ENCODE measurements at regions of chr9 and their contacts with region 1.

Region 1: GRCh38 chr9:129884220-129885017 is 49.2 kb downstream of the USP20 start:
- DNase-seq: peak; percentile 98
- ATAC-seq: peak; percentile 62
- H3K4me3 Mint-ChIP-seq: peak overlapping the region; percentile 90
- H3K27ac Mint-ChIP-seq: peak overlapping the region; percentile 99
- H3K4me1 Mint-ChIP-seq: peaks cover 57% of the 10 kb centered on the region
- H3K27me3 Mint-ChIP-seq: no peaks in the 10 kb centered on the region

Region 2: GRCh38 chr9:129569502-129570449 is 314.6 kb before region 1 on chr9:
- CTCF ChIA-PET with region 1: no interaction called
- POLR2A ChIA-PET with region 1: no interaction called
- DNase-seq: no peak
- ATAC-seq: no peak
- H3K4me3 Mint-ChIP-seq: peak overlapping the region; percentile 54
- H3K27ac Mint-ChIP-seq: no peak overlapping the region
- H3K4me1 Mint-ChIP-seq: peaks cover 25% of the 10 kb centered on the region
- H3K27me3 Mint-ChIP-seq: peaks cover 30% of the 10 kb centered on the region

Region 3: DNA sequence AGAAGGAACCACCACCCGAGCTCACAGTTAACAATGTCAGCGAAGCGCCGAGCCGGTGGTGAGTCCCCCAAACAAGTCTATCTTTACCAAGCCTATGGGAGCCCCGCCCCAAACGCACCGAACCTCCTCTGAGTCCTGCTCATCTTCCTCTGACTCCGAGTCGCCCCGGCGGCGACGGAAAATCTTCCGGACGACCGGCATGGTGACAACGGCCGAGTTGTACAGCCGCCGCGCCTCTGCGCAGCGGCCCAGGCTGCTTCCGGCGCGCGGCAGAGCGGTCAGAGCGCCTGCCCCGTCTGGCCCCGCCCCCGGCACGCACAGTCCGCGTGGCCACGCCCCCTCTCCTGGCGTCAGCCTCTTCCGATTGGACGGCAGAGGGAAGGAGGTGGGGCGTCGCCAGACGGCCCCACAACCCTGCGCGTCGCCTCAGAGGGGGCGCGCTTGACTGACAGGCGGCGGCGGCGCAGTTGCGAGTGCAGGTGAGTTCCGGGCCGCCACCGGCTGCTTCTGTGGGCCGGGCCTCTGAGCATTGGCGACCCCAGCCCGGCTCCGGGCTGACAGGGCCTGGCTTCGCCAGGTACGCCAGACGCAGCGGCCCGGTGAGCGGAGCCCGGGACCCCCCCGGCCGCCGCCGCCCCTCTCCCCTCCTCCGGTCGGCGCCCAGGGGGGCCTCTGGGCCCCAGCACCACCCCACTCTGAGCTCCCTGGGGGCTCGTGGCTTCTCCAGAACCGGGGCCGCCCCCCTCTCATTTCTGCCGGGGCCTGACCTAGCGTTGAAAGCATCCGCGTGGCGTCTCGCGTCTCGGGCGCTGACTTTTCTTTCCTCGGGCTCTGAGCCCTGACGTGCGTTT is 49.2 kb before region 1 on chr9 and contains the starts of genes C9orf78 and USP20:
- CTCF ChIA-PET with region 1: interaction called, 8 read pairs
- POLR2A ChIA-PET with region 1: interaction called, 25 read pairs
- DNase-seq: peak; percentile 97
- ATAC-seq: peak; percentile 91
- H3K4me3 Mint-ChIP-seq: peak within 1 kb of the TSS; percentile 98
- H3K27ac Mint-ChIP-seq: peak within 1 kb of the TSS; percentile 99
- H3K4me1 Mint-ChIP-seq: peaks cover 57% of the 10 kb centered on the region
- H3K27me3 Mint-ChIP-seq: no peaks in the 10 kb centered on the region
- total RNA-seq, gene C9orf78: 89.7 to 91.7 TPM
- total RNA-seq, gene USP20: 86.2 to 87.4 TPM

Region 4: DNA sequence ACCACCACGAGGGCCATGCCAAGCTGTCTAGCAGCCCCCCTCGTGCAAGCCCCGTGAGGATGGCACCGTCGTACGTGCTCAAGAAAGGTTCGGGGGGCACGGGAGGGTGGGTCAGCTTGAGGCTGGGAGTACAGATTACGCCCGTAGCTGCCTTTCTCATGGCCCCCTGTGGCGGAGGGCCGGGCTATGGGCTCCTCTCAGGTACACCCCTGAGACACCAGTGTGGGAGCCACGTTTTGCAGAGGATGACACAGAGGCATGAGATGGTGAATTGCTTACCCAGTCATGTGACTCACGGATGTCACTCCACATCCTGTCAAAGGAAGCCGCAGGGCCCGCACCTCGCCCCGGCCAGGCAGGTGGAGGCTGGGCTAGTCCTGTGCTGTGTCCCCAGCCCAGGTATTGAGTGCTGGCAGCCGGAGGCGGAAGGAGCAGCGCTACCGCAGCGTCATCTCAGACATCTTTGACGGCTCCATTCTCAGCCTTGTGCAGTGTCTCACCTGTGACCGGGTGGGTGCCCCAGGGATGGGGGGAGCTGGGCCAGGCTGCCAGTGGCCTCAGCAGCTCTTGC is 15.4 kb before region 1 on chr9:
- CTCF ChIA-PET with region 1: interaction called, 25 read pairs
- POLR2A ChIA-PET with region 1: interaction called, 126 read pairs
- DNase-seq: peak; percentile 96
- ATAC-seq: peak; percentile 85
- H3K4me3 Mint-ChIP-seq: peak overlapping the region; percentile 67
- H3K27ac Mint-ChIP-seq: peak overlapping the region; percentile 95
- H3K4me1 Mint-ChIP-seq: peaks cover 84% of the 10 kb centered on the region
- H3K27me3 Mint-ChIP-seq: no peaks in the 10 kb centered on the region

Region 5: DNA sequence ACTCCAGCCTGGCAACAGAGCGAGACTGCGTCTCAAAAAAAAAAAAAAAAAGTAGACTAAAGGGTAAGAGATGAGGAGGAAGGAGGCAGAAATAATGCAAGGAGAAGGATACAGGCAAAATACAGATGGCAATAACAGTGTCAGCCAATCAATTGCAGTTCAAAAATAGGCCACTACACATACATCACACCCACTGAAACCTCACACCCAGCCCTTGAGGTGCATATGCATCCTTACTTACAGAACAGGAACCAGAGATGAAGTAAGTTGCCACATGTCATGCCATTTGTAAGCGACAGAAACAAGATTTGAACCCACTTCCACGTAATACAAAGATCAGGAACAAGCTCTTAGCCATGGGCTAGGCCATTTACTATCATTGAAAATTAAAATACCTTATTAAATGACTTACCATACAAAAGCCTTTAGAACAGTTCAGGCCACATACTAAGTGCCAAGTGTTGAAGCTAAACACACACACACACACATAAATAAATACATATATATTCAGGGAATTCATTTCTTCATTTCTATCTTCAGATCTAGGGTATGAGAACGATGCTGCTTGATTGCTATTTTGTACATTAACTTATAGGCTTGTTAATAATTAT is 60.2 kb after region 1 on chr9:
- CTCF ChIA-PET with region 1: interaction called, 4 read pairs
- POLR2A ChIA-PET with region 1: interaction called, 15 read pairs
- DNase-seq: peak; percentile 83
- ATAC-seq: peak; percentile 95
- H3K4me3 Mint-ChIP-seq: peak overlapping the region; percentile 12
- H3K27ac Mint-ChIP-seq: peak overlapping the region; percentile 81
- H3K4me1 Mint-ChIP-seq: peaks cover 56% of the 10 kb centered on the region
- H3K27me3 Mint-ChIP-seq: no peaks in the 10 kb centered on the region

Region 6: DNA sequence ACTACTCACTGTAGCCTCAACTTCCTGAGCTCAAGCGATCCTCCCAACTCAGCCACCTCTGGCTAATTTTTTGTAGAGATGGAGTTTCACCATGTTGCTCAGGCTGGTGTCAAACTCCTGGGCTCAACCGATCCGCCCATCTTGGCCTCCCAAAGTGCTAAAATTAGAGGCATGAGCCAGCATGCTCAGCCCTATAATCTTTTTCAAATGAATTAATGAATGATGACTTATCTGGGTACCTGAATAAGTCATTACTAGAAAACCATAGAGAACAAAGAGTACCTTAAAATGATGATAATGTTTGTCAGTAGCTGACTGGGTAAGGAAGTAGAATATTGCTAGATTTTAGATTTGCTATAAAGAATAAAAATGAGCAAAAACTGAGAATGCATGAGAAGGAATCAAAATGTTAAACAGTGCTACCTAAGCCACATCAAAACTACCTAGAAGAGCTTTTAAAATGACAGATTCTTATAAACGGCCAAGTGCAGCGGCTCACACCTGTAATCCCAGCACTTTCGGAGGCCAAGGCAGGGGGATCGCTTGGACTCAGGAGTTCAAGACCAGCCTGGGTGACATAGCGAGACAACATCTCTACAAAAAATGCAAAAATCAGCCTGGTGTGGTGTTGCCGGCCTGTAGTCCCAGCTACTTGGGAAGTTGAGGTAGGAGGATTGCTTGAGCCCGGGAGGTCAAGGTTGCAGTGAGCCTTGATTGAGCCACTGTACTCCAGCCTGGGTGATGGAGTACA is 145.0 kb after region 1 on chr9:
- CTCF ChIA-PET with region 1: interaction called, 4 read pairs
- POLR2A ChIA-PET with region 1: interaction called, 33 read pairs
- DNase-seq: peak; percentile 41
- ATAC-seq: peak; percentile 26
- H3K4me3 Mint-ChIP-seq: peak overlapping the region; percentile 32
- H3K27ac Mint-ChIP-seq: peak overlapping the region; percentile 78
- H3K4me1 Mint-ChIP-seq: peaks cover 91% of the 10 kb centered on the region
- H3K27me3 Mint-ChIP-seq: no peaks in the 10 kb centered on the region

Region 7: DNA sequence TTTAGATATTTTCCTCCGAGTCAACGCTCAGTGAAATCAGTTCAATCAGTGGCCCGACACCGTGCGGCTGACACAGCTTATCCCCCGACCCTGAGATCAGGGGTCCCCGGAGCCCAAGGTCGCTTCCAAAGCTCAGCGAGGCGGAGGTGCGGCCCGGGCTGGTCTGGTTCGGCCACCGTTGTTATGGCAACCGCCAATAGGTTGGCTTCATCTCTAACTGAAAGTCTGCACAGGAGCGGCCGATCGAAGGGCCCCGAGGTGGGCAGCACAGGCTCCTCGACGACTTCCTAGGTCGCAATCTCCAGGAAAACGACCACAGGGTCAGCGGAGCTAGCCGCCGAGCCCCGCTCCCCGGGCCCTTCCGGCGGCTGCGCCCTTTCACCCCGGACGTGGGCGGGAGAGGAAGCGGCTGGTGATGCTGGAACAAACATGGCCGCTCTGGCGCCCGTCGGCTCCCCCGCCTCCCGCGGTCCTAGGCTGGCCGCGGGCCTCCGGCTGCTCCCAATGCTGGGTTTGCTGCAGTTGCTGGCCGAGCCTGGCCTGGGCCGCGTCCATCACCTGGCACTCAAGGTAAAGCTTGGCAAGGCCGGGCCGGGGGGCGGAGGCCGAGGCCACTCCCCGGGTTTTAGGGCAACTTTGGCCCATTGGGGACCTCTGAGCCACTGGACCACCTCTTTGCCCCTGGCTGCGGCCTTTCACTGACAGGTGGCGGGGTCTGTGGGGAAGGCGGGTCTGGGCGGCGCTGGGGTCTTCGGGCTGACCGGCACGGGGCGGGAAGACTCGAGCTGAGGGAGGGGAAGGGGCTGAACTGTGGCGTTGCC is 169.3 kb after region 1 on chr9 and contains the start of gene GPR107:
- CTCF ChIA-PET with region 1: interaction called, 4 read pairs
- POLR2A ChIA-PET with region 1: interaction called, 17 read pairs
- DNase-seq: peak; percentile 82
- ATAC-seq: peak; percentile 94
- H3K4me3 Mint-ChIP-seq: peak within 1 kb of the TSS; percentile 93
- H3K27ac Mint-ChIP-seq: peak within 1 kb of the TSS; percentile 93
- H3K4me1 Mint-ChIP-seq: peaks cover 45% of the 10 kb centered on the region
- H3K27me3 Mint-ChIP-seq: no peaks in the 10 kb centered on the region
- total RNA-seq, gene GPR107: 22.5 to 24.4 TPM